ENCODE measurements at regions of chr1 and their contacts with region 1.

Region 1: GRCh38 chr1:167542109-167543032 is 11.2 kb downstream of the CREG1 start:
- DNase-seq: peak; percentile 60
- ATAC-seq: peak; percentile 79
- H3K4me3 Mint-ChIP-seq: peak overlapping the region; percentile 8
- H3K27ac Mint-ChIP-seq: peak overlapping the region; percentile 83
- H3K4me1 Mint-ChIP-seq: peaks cover 59% of the 10 kb centered on the region
- H3K27me3 Mint-ChIP-seq: no peaks in the 10 kb centered on the region

Region 2: GRCh38 chr1:167270349-167271092 is 271.9 kb before region 1 on chr1:
- CTCF ChIA-PET with region 1: interaction called, 15 read pairs
- DNase-seq: no peak
- ATAC-seq: no peak
- H3K4me3 Mint-ChIP-seq: no peak overlapping the region
- H3K27ac Mint-ChIP-seq: no peak overlapping the region
- H3K4me1 Mint-ChIP-seq: peaks cover 22% of the 10 kb centered on the region
- H3K27me3 Mint-ChIP-seq: no peaks in the 10 kb centered on the region

Region 3: GRCh38 chr1:167409183-167409582 is 133.2 kb before region 1 on chr1:
- CTCF ChIA-PET with region 1: interaction called, 18 read pairs
- DNase-seq: no peak
- ATAC-seq: no peak
- H3K4me3 Mint-ChIP-seq: no peak overlapping the region
- H3K27ac Mint-ChIP-seq: no peak overlapping the region
- H3K4me1 Mint-ChIP-seq: peaks cover 20% of the 10 kb centered on the region
- H3K27me3 Mint-ChIP-seq: no peaks in the 10 kb centered on the region

Region 4: GRCh38 chr1:167447521-167448136 is 94.7 kb before region 1 on chr1:
- CTCF ChIA-PET with region 1: interaction called, 12 read pairs
- DNase-seq: peak; percentile 86
- ATAC-seq: peak; percentile 81
- H3K4me3 Mint-ChIP-seq: peak overlapping the region; percentile 53
- H3K27ac Mint-ChIP-seq: peak overlapping the region; percentile 93
- H3K4me1 Mint-ChIP-seq: peaks cover 86% of the 10 kb centered on the region
- H3K27me3 Mint-ChIP-seq: no peaks in the 10 kb centered on the region

Region 5: DNA sequence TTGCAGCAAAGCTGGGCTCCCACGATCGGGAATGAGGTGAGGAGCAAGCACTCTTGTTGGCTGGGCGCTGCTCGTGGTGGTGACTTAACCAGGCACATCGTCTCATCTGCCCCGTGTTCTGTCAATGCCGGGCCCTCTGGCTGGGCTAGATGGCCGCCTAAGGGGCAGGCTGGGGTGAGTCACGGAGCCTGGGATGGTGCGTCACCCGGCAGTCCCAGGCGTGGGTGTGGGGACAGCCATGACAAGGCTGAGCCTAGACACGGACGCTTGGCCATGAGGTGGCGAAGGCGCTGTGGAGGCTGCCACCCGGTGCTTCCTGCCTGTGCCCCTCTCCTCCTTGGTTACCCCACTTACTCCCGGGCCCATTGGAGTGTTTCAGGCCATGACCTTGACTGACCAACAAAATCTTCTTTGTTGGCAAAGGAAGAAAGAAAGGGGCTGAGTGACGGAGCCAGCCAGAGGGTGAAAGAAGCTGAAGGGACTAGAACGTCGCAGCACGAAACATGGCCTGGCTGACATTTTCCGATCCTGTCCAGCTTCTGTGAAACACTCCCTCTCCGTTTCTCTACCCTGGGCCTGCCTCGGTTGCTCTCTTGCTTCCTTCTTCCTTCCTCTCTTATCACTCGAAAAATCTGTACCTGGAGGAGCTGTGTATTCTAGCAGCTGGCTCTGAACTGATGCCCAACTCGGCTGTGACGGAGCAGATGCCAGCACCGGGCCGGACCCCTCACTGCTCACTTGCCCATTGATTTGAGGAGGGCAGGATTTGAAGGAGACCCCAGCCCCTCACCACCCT is 24.6 kb before region 1 on chr1:
- CTCF ChIA-PET with region 1: interaction called, 39 read pairs
- DNase-seq: peak; percentile 93
- ATAC-seq: peak; percentile 90
- H3K4me3 Mint-ChIP-seq: peak overlapping the region; percentile 94
- H3K27ac Mint-ChIP-seq: peak overlapping the region; percentile 98
- H3K4me1 Mint-ChIP-seq: peaks cover 41% of the 10 kb centered on the region
- H3K27me3 Mint-ChIP-seq: peaks cover 4% of the 10 kb centered on the region

Region 6: DNA sequence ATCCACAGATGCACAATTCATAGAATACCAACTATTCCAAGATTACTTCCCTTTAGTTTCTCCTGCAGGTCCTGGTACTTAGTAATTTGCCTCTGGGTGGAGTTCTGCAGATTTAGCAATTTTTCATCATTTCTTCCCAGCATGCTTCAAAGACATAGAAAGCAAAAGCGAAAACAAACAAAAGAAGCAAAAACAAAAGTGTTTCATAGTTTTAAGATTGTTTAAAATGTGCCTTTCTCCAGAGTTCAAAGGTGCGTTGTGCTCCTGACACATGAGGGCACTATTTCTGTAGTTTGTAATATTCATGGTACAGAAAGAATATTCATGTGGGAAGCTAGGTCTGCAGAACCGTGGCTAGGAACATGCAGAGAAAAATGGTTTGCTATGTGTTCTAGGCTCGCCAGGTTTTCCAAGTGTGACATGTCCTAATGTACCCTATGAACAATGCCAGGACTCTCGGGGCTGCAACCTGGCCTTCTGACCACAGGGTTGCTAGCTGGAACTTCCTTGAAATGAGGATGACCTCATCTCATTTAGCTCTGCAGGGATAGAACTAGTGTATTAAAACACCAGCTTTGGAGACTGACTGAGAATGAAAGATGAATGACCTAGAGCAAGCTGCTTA is 57.7 kb after region 1 on chr1:
- CTCF ChIA-PET with region 1: no interaction called
- DNase-seq: peak; percentile 63
- ATAC-seq: peak; percentile 90
- H3K4me3 Mint-ChIP-seq: peak overlapping the region; percentile 58
- H3K27ac Mint-ChIP-seq: peak overlapping the region; percentile 77
- H3K4me1 Mint-ChIP-seq: peaks cover 38% of the 10 kb centered on the region
- H3K27me3 Mint-ChIP-seq: no peaks in the 10 kb centered on the region

Region 7: DNA sequence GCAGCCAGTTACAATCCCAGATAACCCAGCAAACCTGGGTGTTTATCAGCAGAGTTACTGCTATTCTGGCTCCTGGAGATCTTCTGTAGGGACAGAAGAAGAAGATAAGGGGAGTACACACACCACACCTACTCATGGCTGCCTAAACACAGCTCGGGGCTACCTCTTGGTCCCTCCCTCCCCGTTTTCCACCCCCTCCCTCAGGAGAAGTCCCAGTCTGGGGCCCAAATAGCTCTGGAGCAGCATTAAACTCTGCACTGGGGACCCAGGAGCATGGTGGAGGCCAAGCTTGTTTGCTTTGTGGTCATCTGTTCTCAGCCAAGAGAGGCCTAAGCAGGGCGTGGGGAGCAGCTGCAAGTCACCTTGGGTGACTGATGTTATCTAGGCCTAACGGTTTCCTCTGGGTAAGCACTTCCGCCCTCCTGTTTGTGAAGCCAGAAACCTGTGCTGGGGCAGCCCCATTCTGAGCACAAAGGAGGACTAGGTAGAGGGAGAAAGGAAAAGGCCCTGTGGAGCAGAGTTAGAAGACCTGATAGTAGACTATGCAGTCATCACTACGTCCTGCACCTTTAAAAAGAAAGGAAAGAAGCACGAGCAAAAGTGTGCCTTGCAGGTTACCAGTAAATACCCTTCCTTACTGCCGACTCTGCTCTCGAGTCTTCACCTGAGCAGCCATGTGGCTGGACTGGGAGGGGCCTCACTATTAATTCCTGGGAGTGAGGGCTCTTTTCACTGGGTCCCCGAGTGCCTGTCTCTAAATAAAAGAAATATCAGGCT is 85.7 kb after region 1 on chr1:
- CTCF ChIA-PET with region 1: no interaction called
- DNase-seq: peak; percentile 93
- ATAC-seq: peak; percentile 82
- H3K4me3 Mint-ChIP-seq: peak overlapping the region; percentile 83
- H3K27ac Mint-ChIP-seq: peak overlapping the region; percentile 98
- H3K4me1 Mint-ChIP-seq: peaks cover 55% of the 10 kb centered on the region
- H3K27me3 Mint-ChIP-seq: no peaks in the 10 kb centered on the region

Measured in activated CD8-positive, alpha-beta memory T cell treated with anti-CD3 and anti-CD28 coated beads, Interleukin-2, amount 10 ng/mL, durations not matched to agents 7 days and 5 days (primary cell).